ENCODE measurements at regions of chr9 and their contacts with region 1.

Region 1: GRCh38 chr9:137423004-137423874 is at the starts of genes EXD3 and NOXA1:
- DNase-seq: peak; percentile 98
- H3K4me3 Mint-ChIP-seq: peak within 1 kb of the TSS; percentile 90
- H3K27ac Mint-ChIP-seq: peak within 1 kb of the TSS; percentile 44
- H3K4me1 Mint-ChIP-seq: peaks cover 5% of the 10 kb centered on the region
- H3K27me3 Mint-ChIP-seq: peaks cover 9% of the 10 kb centered on the region
- total RNA-seq, gene EXD3: 4.4 and 5.2 TPM in 2 replicates
- total RNA-seq, gene NOXA1: 0.30 and 0.36 TPM in 2 replicates

Region 2: GRCh38 chr9:137302176-137302994 is 120.9 kb before region 1 on chr9 and contains the start of gene NRARP:
- intact Hi-C with region 1: loop called (anchors 5 kb)
- DNase-seq: peak; percentile 98
- H3K4me3 Mint-ChIP-seq: peak within 1 kb of the TSS; percentile 83
- H3K27ac Mint-ChIP-seq: no peak within 1 kb of the TSS
- H3K4me1 Mint-ChIP-seq: peaks cover 10% of the 10 kb centered on the region
- H3K27me3 Mint-ChIP-seq: peaks cover 21% of the 10 kb centered on the region
- total RNA-seq, gene NRARP: 12.9 and 13.4 TPM in 2 replicates

Region 3: GRCh38 chr9:137353223-137354152 is 69.8 kb before region 1 on chr9:
- intact Hi-C with region 1: no loop called
- DNase-seq: no peak
- H3K4me3 Mint-ChIP-seq: no peak overlapping the region
- H3K27ac Mint-ChIP-seq: no peak overlapping the region
- H3K4me1 Mint-ChIP-seq: no peaks in the 10 kb centered on the region
- H3K27me3 Mint-ChIP-seq: no peaks in the 10 kb centered on the region

Region 4: GRCh38 chr9:137445275-137445807 is 22.1 kb after region 1 on chr9:
- intact Hi-C with region 1: loop called (anchors 2 kb)
- DNase-seq: peak; percentile 96
- H3K4me3 Mint-ChIP-seq: no peak overlapping the region
- H3K27ac Mint-ChIP-seq: no peak overlapping the region
- H3K4me1 Mint-ChIP-seq: peaks cover 10% of the 10 kb centered on the region
- H3K27me3 Mint-ChIP-seq: peaks cover 13% of the 10 kb centered on the region

Region 5: DNA sequence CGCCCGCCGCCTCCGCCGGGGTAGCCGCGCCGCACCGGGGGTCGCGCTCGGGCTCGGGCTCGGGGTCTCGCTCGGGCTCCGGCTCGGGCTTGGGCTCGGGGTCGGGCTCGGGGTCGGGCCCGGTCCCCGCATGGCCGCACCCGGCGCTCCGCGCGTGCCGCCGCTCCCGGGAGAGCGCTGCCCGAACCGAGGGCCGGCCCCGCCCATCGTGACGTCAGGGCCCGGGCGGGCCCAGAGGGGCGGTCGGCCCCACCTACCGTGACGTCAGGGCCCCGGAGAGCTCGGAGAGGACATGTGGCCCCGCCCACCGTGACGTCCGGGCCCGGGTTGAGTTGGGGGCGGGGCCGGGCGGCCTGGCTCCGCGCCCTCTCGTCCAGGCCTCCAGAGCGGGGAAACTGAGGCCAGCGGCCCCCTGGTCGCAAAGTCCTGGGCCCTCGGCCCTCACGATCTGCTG is 35.9 kb after region 1 on chr9 and contains the start of gene NSMF:
- intact Hi-C with region 1: loop called (anchors 5 kb)
- DNase-seq: peak; percentile 99
- H3K4me3 Mint-ChIP-seq: peak within 1 kb of the TSS; percentile 57
- H3K27ac Mint-ChIP-seq: no peak within 1 kb of the TSS
- H3K4me1 Mint-ChIP-seq: peaks cover 16% of the 10 kb centered on the region
- H3K27me3 Mint-ChIP-seq: no peaks in the 10 kb centered on the region
- total RNA-seq, gene NSMF: 68.6 and 69.6 TPM in 2 replicates